IMR-90 (cell line): ENCODE measurements at regions of chr9 and their contacts with region 1.

Region 1: DNA sequence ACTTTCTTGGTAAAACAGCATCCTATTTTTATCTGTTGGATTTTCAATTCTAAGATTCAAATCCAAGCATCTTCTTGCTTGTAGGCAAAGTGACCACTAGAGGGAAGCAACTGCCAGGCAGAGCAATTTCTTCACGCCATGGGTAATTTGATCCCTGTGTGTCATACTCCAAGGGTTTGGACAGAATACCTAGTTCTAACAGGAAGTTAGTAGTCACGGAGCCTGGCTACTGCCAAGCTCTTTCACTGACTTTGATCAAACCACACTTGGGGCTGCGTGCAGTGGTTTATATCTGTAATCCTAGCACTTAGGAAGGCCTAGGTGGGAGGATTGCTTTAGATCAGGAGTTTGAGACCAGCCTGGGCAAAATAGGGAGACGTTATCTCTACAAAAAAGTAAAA is 473.6 kb upstream of the TNC start:
- DNase-seq: peak; percentile 100
- ATAC-seq: peak; percentile 61
- H3K4me3 ChIP-seq: no peak overlapping the region
- H3K27ac ChIP-seq: peak overlapping the region; percentile 87
- H3K4me1 ChIP-seq: peaks cover 24% of the 10 kb centered on the region
- H3K27me3 ChIP-seq: no peaks in the 10 kb centered on the region
- CTCF ChIP-seq: peak; percentile 96
- POLR2A ChIP-seq: peak; percentile 65
- RAD21 ChIP-seq: peak; percentile 100

Region 2: GRCh38 chr9:115234094-115234493 is 357.5 kb before region 1 on chr9:
- CTCF ChIA-PET with region 1: no interaction called
- POLR2A ChIA-PET with region 1: no interaction called
- dilution Hi-C with region 1: no loop called
- in situ Hi-C with region 1: no loop called
- intact Hi-C with region 1: no loop called
- DNase-seq: peak; percentile 91
- ATAC-seq: peak; percentile 95
- H3K4me3 ChIP-seq: no peak overlapping the region
- H3K27ac ChIP-seq: no peak overlapping the region
- H3K4me1 ChIP-seq: peaks cover 10% of the 10 kb centered on the region
- H3K27me3 ChIP-seq: peaks cover 6% of the 10 kb centered on the region
- CTCF ChIP-seq: no peak
- POLR2A ChIP-seq: no peak
- RAD21 ChIP-seq: peak; percentile 26; the same call in 1 of the 2 replicates

Region 3: DNA sequence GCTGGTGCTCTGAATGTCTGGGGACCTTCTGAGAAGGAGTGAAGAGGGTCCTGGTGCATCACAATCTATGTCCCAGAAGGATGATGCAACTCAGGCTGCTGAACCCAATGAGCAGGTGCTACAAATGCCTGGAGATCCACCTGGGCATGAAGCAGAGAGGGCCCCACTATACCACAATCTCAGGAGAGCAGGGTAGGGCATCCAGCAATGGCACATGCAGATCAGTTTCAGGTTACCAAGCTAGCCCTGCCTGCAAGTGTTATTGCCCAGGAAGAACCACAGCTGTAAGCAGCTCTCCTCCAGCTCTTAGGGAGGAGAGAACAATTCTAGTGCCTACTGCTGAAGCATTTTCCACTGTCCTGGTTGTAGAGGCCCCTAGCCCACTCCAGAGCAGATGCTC is 84.4 kb before region 1 on chr9:
- CTCF ChIA-PET with region 1: no interaction called
- POLR2A ChIA-PET with region 1: no interaction called
- dilution Hi-C with region 1: no loop called
- in situ Hi-C with region 1: no loop called
- intact Hi-C with region 1: no loop called
- DNase-seq: no peak
- ATAC-seq: no peak
- H3K4me3 ChIP-seq: no peak overlapping the region
- H3K27ac ChIP-seq: no peak overlapping the region
- H3K4me1 ChIP-seq: no peaks in the 10 kb centered on the region
- H3K27me3 ChIP-seq: no peaks in the 10 kb centered on the region
- CTCF ChIP-seq: no peak
- POLR2A ChIP-seq: no peak
- RAD21 ChIP-seq: no peak

Region 4: DNA sequence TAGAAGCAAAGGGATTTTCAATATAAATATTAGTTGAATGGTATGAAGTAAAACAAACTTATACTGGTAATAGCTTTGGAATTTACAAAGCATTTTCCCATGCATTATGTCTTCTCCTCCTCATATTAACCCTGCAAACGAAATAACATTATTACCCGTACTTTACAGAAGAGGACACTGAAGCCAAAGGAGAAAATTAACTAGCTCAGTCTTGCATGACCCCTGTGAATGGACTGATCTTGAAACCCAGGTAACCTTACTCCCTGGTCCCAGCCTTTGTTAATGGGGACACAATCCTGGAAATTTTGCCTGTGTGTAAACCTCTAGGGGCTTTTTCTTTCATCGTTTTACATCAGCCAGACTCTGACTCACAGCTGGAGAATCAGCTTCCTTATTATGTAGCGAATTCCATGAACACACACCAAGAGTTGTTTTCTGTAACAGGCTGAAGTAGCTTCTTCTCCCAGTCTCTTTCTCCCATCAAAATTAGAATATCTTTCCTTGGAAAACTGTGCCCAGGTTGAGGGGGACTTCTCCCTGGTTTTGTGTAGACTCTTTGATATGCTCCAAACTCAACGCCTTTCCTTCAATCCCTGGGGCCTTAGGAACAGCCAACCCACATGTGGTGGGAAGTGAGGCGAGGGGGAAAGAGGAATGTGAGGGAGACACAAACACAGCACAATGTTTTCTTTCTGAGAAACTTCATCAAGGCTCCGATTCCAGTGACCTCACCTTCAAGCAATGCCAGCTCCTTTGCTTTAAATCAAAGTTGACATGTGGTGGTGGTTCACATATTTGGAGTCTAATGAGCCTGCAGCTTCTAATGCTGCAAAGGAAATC is 81.1 kb after region 1 on chr9:
- CTCF ChIA-PET with region 1: interaction called, 7 read pairs
- POLR2A ChIA-PET with region 1: interaction called, 4 read pairs
- dilution Hi-C with region 1: no loop called
- in situ Hi-C with region 1: no loop called
- intact Hi-C with region 1: loop called (anchors 1 kb)
- DNase-seq: peak; percentile 99
- ATAC-seq: peak; percentile 74
- H3K4me3 ChIP-seq: peak overlapping the region; percentile 10; the same call in 1 of the 2 replicates
- H3K27ac ChIP-seq: peak overlapping the region; percentile 99
- H3K4me1 ChIP-seq: peaks cover 35% of the 10 kb centered on the region
- H3K27me3 ChIP-seq: no peaks in the 10 kb centered on the region
- CTCF ChIP-seq: no peak
- POLR2A ChIP-seq: peak; percentile 73
- RAD21 ChIP-seq: peak; percentile 32; the same call in 1 of the 2 replicates

Region 5: DNA sequence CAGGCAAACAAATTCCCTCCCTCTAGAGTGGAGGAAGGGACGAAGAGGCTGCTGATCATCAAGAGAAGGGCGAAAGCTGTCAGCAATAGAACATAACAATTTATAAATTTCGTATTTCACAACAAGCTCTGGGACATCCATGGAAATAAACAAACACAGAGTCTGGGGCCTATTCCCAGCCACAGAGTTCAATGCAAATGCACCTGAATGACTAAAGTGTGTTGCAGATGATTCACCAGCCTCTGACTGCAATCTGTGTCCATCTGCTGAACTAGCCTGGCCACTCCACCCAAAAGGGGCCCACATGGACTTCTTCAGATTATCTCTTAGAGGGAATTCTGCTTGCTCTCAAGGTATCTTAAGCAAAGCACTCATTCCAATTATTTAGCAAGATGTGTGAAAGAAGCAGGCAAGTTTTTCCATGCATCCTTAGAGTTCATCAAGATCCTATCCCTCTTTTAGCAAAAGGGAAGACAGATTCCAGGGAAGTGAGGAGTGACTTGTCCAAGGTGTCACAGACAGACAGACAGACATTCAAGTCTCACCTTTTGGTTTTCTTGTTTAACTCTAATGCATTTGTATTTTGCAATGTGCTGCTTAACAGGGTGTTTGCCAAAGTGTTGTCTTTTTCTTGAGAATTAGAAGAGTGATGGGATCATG is 254.2 kb after region 1 on chr9:
- CTCF ChIA-PET with region 1: no interaction called
- POLR2A ChIA-PET with region 1: no interaction called
- dilution Hi-C with region 1: no loop called
- in situ Hi-C with region 1: loop called (anchors 10 kb)
- intact Hi-C with region 1: loop called (anchors 5 kb)
- DNase-seq: peak; percentile 92
- ATAC-seq: peak; percentile 82
- H3K4me3 ChIP-seq: no peak overlapping the region
- H3K27ac ChIP-seq: no peak overlapping the region
- H3K4me1 ChIP-seq: peaks cover 6% of the 10 kb centered on the region
- H3K27me3 ChIP-seq: no peaks in the 10 kb centered on the region
- CTCF ChIP-seq: no peak
- POLR2A ChIP-seq: no peak
- RAD21 ChIP-seq: no peak

Region 6: GRCh38 chr9:116027556-116028350 is 436.2 kb after region 1 on chr9:
- CTCF ChIA-PET with region 1: no interaction called
- POLR2A ChIA-PET with region 1: no interaction called
- dilution Hi-C with region 1: no loop called
- in situ Hi-C with region 1: no loop called
- intact Hi-C with region 1: loop called (anchors 5 kb)
- DNase-seq: peak; percentile 92
- ATAC-seq: peak; percentile 95
- H3K4me3 ChIP-seq: no peak overlapping the region
- H3K27ac ChIP-seq: peak overlapping the region; percentile 97
- H3K4me1 ChIP-seq: peaks cover 5% of the 10 kb centered on the region
- H3K27me3 ChIP-seq: no peaks in the 10 kb centered on the region
- CTCF ChIP-seq: no peak
- POLR2A ChIP-seq: no peak
- RAD21 ChIP-seq: no peak

Region 7: DNA sequence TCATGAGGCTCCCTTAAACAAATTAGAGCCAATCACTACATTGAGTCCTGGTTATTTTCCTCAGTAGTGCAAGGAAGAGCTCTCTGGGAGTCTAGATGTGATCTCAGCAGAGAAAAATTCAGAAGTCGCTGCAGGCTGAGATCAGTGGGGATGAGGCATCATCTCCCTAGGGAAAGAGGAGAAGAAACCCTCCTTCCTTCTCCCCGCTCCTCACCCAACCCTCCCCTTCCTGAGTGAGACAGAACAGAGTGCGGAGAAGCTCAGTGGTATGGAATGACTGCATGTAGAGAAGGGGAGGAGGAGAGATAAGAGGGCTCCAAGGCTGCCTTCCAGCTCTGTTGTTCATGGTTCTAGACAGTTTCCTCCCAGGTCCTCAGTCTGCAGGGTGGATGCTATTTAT is 642.5 kb after region 1 on chr9:
- CTCF ChIA-PET with region 1: no interaction called
- POLR2A ChIA-PET with region 1: no interaction called
- dilution Hi-C with region 1: no loop called
- in situ Hi-C with region 1: no loop called
- intact Hi-C with region 1: loop called (anchors 2 kb)
- DNase-seq: peak; percentile 99
- ATAC-seq: peak; percentile 94
- H3K4me3 ChIP-seq: no peak overlapping the region
- H3K27ac ChIP-seq: peak overlapping the region; percentile 78
- H3K4me1 ChIP-seq: peaks cover 23% of the 10 kb centered on the region
- H3K27me3 ChIP-seq: no peaks in the 10 kb centered on the region
- CTCF ChIP-seq: no peak
- POLR2A ChIP-seq: peak; percentile 54; the same call in 1 of the 2 replicates
- RAD21 ChIP-seq: peak; percentile 23; the same call in 1 of the 2 replicates

Region 8: DNA sequence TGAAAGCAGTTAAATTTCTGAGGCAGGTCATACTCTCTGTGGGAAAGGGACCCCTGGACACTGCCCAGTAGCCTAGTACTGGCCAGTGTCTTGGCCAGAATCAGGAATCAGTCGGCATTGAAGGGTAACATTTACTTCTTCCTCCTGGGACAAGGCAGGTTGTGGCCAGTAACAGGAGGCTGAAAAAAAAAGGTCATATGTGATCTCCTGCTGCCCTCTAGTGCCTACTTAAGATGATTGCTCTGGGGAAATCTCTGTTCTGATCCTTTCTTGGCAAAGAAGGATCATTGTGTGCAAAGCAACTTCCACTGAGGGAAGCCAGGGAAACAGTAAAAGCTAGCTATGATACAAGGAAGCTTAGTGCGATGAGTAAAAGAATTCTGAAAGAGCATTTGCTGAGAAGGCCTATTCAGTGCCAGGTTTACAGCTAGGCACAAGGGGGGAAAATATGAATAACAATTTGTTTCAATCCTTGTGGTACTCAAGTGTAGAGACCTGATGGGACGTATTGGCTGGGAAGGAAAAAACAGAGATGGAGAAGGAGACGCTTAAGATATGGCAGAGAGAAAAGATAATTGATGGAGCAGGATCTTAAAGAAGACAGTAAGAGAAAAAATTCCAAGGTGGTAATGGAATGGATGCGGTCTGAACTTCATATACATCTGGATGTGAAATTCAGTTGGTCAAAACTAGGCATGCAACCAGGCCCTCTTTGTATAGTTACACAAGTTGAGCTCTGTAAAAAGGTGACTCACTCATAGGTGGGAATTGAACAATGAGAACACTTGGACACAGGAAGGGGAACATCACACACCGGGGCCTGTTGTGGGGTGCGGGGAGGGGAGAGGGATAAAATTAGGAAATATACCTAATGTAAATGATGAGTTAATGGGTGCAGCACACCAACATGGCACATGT is 1069.7 kb after region 1 on chr9:
- CTCF ChIA-PET with region 1: interaction called, 4 read pairs
- POLR2A ChIA-PET with region 1: no interaction called
- dilution Hi-C with region 1: no loop called
- in situ Hi-C with region 1: loop called (anchors 10 kb)
- intact Hi-C with region 1: loop called (anchors 1 kb)
- DNase-seq: peak; percentile 84
- ATAC-seq: peak; percentile 86
- H3K4me3 ChIP-seq: no peak overlapping the region
- H3K27ac ChIP-seq: no peak overlapping the region
- H3K4me1 ChIP-seq: peaks cover 3% of the 10 kb centered on the region; the same call in 1 of the 2 replicates
- H3K27me3 ChIP-seq: no peaks in the 10 kb centered on the region; the same call in 1 of the 2 replicates
- CTCF ChIP-seq: peak; percentile 82
- POLR2A ChIP-seq: no peak
- RAD21 ChIP-seq: peak; percentile 86